Adrenal gland (tissue), 19 donors: ENCODE measurements at regions of chr9 and their contacts with region 1.

Region 1: DNA sequence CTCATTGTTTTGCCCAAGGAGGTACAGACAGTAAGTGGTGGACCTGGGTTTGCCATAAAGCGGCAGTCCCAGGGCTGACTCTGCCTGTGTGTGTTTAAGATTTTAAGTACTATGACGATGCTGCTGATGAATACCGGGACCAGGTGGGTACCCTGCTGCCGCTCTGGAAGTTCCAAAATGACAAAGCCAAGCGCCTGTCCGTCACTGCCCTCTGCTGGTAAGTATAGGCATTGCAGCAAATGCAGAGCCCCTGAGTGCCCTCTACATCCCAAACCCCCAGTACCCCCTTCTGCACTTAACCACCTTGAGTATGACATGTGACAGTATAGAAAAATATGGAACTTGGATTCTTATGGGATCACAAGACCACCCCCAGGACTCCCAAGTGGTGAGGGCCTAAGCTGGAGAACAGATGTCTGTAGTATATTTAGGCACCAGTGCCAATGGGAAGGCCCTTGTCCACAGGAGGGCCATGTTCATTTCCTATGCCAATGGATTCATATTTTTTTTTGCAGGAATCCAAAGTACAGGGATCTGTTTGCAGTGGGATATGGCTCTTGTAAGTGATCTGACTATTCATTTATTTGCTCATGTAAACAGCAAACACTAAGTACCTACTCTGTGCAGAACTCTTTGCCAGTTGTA is 22.0 kb downstream of the ENHO start:
- DNase-seq: peak; percentile 36 to 80 (median 61)
- H3K4me3 ChIP-seq: no peak overlapping the region
- H3K27ac ChIP-seq: no peak overlapping the region
- H3K4me1 ChIP-seq: no peaks in the 10 kb centered on the region
- H3K27me3 ChIP-seq: no peaks in the 10 kb centered on the region
- CTCF ChIP-seq: peak; percentile 90 to 97 (median 92)
- POLR2A ChIP-seq: no peak

Region 2: DNA sequence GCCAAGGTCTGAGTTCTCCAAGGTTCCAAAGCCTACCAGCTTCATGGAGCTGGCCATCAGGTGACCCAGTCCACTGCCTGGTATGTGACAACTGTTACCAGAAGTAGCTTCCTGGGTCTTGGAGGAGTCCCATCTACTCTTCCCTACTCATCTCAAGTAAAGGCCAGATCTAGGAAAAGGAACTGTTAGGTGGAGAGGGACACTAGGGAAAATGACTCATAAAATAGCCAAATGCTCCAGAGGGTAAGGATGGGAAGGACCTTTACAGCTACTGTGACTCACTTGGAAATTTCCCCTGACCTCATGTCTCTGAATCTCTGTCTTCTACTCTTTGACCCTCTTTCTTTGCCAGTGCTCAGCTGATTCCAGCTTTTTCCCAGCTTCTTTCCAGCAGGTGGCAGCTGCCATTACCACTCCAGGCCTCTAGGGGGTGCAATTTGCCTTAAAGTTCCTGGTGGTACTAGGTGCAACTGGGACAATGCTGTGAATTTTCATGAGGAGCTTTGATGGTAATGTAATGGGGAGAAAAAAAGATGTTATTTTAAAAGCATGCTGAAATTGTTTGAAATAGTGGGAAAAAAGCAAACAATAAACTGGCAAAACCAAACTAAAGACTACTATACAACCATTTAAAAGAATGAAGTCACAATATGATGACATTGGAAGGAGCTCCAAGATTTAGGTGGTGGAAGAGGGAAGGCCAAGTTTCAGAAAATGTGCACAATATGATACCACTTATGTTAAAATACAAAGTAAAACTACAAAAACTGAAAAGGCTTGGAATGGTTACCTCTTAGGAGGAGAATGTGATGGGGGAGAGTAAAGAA is 97.0 kb before region 1 on chr9:
- intact Hi-C with region 1: loop called (anchors 5 kb)
- DNase-seq: peak; percentile 76 to 93 (median 83)
- H3K4me3 ChIP-seq: no peak overlapping the region
- H3K27ac ChIP-seq: no peak overlapping the region
- H3K4me1 ChIP-seq: no peaks in the 10 kb centered on the region
- H3K27me3 ChIP-seq: no peaks in the 10 kb centered on the region
- CTCF ChIP-seq: peak; percentile 94 to 97 (median 96)
- POLR2A ChIP-seq: no peak

Region 3: GRCh38 chr9:34437006-34437925 is 63.5 kb before region 1 on chr9:
- intact Hi-C with region 1: loop called (anchors 2 to 5 kb)
- DNase-seq: peak; percentile 46 to 88 (median 63)
- H3K4me3 ChIP-seq: no peak overlapping the region
- H3K27ac ChIP-seq: no peak overlapping the region
- H3K4me1 ChIP-seq: peaks cover 0 to 3% of the 10 kb centered on the region in 2 donors
- H3K27me3 ChIP-seq: no peaks in the 10 kb centered on the region
- CTCF ChIP-seq: peak; percentile 51 to 83 (median 76)
- POLR2A ChIP-seq: no peak